ENCODE measurements at regions of chr12 and their contacts with region 1.

Region 1: DNA sequence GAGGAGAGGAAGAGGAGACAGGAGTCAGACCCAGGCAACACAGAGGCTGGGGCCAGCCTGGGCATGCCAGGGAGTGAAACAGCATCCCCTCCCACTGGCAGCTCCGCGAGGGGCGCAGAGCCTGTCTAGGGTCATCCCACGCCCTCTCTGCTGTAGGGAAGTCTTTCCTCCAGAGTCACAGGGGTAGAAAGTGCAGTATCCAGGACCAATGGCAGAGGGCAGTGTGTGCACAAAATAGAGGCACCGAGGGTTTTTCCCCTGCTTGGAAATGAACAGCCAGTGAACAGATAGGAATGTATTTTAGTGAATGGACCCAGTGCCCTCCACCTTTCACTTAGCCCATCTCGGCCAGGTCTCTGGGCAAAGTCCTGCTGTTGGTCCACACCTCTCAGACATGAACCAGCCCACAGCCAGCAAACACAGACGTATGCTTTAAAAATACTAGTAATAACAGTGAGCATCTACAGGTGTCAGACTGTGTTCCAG is 9.4 kb upstream of the KRT74 start:
- DNase-seq: no peak
- ATAC-seq: peak; percentile 77

Region 2: DNA sequence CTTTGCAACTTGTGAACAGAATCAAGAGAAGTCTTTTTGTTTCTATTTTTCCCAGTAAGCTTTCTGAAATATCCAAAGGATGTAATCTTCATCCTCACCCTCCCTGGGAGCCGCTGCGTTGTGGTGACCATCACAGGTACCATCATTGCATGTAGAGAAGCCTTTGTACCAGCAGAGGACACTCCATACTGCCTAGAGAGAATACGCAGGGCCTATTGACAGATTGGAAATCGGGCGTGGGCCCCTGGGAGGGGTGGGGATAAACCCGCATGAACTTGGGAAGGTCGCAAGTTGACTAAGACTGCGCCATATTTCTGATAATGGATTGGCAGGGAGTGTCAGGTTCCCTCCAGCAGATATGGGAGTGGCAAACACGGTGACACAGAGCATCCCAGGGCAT is 84.5 kb after region 1 on chr12:
- intact Hi-C with region 1: loop called (anchors 5 kb)
- DNase-seq: no peak
- ATAC-seq: no peak

Region 3: GRCh38 chr12:52865090-52865944 is 282.3 kb after region 1 on chr12:
- intact Hi-C with region 1: loop called (anchors 1 kb)
- DNase-seq: no peak
- ATAC-seq: no peak

Region 4: GRCh38 chr12:52870351-52871290 is 287.6 kb after region 1 on chr12:
- intact Hi-C with region 1: loop called (anchors 1 kb)
- DNase-seq: no peak
- ATAC-seq: peak; percentile 17

Region 5: GRCh38 chr12:52879394-52880351 is 296.7 kb after region 1 on chr12:
- intact Hi-C with region 1: loop called (anchors 1 kb)
- DNase-seq: peak; percentile 80
- ATAC-seq: peak; percentile 89

Region 6: DNA sequence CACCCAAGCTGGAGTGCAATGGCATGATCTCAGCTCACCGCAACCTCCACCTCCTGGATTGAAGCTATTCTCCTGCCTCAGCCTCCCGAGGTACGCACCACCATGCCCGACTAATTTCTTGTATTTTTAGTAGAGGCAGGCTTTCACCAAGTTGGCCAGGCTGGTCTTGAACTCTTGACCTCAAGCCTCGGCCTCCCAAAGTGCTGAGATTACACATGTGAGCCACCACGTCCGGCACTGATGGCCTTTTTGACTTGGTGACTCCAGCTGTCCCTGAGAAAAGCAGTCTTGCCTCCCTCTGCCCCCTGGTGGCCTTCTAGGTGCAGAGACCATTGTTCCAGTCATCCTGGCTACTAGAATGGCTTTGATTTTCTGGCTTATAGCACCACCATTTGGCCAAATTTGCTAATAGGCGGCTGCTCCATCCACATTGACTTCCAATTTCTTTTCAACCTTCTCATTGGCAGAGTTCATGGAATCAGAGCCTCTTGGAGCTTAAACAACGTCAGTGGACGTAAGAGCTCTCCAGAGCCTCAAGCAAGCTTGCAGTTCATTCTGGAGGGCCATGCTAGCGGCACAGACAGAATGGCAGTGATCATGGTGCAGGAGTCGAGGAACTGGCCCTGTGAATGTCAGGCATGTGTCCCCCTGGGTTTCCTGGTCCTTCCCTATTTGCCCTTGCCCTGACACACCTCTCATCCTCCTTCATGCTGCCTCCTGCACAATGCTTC is 397.8 kb after region 1 on chr12:
- intact Hi-C with region 1: loop called (anchors 10 kb)
- DNase-seq: peak; percentile 86
- ATAC-seq: peak; percentile 93

Measured in Right ventricle myocardium inferior (tissue), 1 donor.